Activated T-helper 1 cell treated with anti-CD3 and anti-CD28 coated beads, Interleukin-12 subunit alpha, Interleukin-12 subunit beta, Interleukin-2, Interleukin-4 antibody, amounts not matched to agents 30 ng/mL and 10 ng/mL and 1 ng/mL, durations not matched to agents 14 hours and 24 hours and 36 hours (primary cell): ENCODE measurements at regions of chr6 and their contacts with region 1.

Region 1: DNA sequence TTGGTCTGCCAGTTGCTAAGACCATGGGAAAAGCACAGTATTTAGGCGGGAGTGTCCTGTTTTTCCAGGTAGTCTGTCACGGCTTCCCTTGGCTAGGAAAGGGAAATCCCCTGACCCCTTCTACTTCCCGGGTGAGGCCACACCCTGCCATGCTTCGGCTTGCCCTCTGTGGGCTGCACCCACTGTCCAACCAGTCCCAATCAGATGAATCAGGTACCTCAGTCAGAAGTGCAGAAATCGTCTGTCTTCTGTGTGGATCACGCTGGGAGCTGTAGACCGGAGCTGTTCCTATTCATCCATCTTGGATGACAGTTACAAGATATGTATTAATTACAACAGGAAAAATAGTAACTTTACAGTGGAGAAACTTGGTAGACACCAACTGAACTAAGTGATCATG is 188.2 kb downstream of the TPBG start:
- DNase-seq: no peak
- H3K4me3 Mint-ChIP-seq: no peak overlapping the region
- H3K27ac Mint-ChIP-seq: no peak overlapping the region
- H3K4me1 Mint-ChIP-seq: no peaks in the 10 kb centered on the region
- H3K27me3 Mint-ChIP-seq: no peaks in the 10 kb centered on the region

Region 2: DNA sequence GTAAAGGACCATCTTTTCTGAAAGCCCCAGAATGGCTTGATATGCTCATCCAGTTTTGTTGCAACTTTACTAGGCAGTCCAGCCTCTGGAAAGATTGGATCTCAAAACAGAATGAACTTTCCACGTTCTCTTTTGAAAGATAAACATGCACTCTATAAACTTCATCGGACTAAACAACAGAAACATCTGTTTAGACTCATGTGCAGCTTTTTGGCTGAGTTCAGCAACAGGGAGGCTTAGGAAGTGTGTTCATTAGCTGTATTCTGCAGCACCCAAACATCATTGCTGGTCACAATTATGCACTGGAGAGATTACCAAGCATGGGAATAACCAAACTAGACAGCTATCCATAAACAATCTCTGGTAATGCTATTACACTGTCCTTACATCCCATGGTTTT is 979.8 kb before region 1 on chr6:
- intact Hi-C with region 1: no loop called
- DNase-seq: no peak
- H3K4me3 Mint-ChIP-seq: no peak overlapping the region
- H3K27ac Mint-ChIP-seq: no peak overlapping the region
- H3K4me1 Mint-ChIP-seq: no peaks in the 10 kb centered on the region
- H3K27me3 Mint-ChIP-seq: no peaks in the 10 kb centered on the region

Region 3: DNA sequence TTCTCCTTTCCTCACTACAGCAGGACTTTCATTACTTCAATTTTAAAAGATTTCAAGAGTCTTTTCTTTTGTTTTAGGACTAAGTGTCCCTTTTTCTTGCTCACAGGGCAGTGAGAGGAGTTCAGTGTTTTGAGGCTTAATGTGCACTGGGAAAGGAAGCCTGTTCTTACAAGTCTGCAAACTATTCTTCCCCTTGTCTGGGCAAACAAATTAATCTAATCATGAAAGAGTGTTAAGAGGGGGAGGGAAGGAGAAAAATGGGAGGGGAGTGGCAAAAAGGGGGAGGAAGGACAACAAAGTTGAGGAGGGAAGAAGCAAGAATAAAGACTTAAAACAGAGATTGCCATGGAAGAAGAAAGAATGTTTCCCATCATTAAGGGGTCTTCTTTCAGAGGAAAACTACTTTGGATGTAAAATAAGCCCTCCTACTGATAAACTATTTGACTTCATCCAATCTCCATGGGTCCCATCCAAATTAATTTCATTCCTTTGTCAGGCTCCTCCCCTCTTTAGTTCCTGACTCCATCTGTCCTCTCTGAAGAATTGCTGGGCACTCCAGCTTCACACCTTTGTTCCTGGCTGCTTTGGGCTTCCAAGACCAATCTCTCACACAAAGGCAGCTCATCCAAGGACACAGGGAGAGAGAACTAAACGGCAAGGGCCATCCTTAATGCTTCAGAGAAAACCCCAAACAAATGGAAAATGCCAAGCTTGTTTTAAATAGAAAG is 56.3 kb after region 1 on chr6:
- intact Hi-C with region 1: loop called (anchors 2 kb)
- DNase-seq: no peak
- H3K4me3 Mint-ChIP-seq: no peak overlapping the region
- H3K27ac Mint-ChIP-seq: no peak overlapping the region
- H3K4me1 Mint-ChIP-seq: no peaks in the 10 kb centered on the region
- H3K27me3 Mint-ChIP-seq: no peaks in the 10 kb centered on the region

Region 4: GRCh38 chr6:82712852-82713251 is 161.0 kb after region 1 on chr6:
- intact Hi-C with region 1: no loop called
- DNase-seq: no peak
- H3K4me3 Mint-ChIP-seq: no peak overlapping the region
- H3K27ac Mint-ChIP-seq: no peak overlapping the region
- H3K4me1 Mint-ChIP-seq: no peaks in the 10 kb centered on the region
- H3K27me3 Mint-ChIP-seq: no peaks in the 10 kb centered on the region